ENCODE measurements at regions of chr6 and their contacts with region 1.

Region 1: GRCh38 chr6:105136431-105137350 is 43.1 kb downstream of the POPDC3 start:
- DNase-seq: peak; percentile 88
- H3K4me3 ChIP-seq: peak overlapping the region; percentile 60 to 97 (median 76)
- H3K27ac ChIP-seq: peak overlapping the region; percentile 82 to 97 (median 88)
- H3K4me1 ChIP-seq: peaks cover 0 to 20% (median 10%) of the 10 kb centered on the region in 4 donors
- H3K27me3 ChIP-seq: no peaks in the 10 kb centered on the region
- CTCF ChIP-seq: peak in 3 of 4 experiments; percentile 17 to 41 (median 31)
- EP300 ChIP-seq: no peak
- POLR2A ChIP-seq: no peak

Region 2: DNA sequence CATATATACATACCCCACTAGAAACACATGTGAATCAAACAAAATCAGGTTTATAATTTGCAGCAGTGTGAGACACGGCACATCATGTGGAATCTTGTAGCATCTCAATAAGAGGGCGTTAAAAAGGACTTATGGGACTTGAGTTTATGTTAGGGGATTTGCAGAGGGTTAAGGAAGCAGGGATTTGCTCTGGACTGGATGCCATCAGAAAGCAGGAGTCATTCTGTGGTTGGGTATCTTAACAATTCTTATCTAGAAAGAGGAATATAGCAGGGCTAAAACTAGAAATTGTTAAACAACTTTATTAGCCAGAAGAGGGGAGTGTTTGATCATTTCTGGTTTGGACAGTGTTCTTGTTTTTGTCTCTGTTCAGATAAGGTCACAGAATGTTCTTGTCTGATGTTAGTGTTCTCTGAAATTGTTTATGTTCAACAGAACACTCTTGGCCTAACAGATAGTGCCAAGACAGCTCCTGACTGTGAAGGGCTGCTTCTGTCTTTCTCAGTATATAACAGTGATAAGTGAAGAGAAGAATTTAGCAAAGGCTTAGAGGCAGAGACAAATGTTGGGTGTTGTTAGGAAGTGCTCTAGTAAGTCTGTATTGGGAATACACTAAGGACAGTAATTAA is 140.6 kb before region 1 on chr6:
- intact Hi-C with region 1: loop called (anchors 2 kb)
- DNase-seq: peak; percentile 67
- H3K4me3 ChIP-seq: no peak overlapping the region
- H3K27ac ChIP-seq: peak overlapping the region; percentile 73 to 81 (median 75)
- H3K4me1 ChIP-seq: peaks cover 0 to 44% (median 9%) of the 10 kb centered on the region in 4 donors
- H3K27me3 ChIP-seq: no peaks in the 10 kb centered on the region
- CTCF ChIP-seq: peak; percentile 30 to 58 (median 40)
- EP300 ChIP-seq: peak in 2 of 4 donors; percentile 58 to 86
- POLR2A ChIP-seq: no peak

Region 3: GRCh38 chr6:105087571-105088211 is 49.0 kb before region 1 on chr6:
- intact Hi-C with region 1: loop called (anchors 5 kb)
- DNase-seq: no peak
- H3K4me3 ChIP-seq: no peak overlapping the region
- H3K27ac ChIP-seq: no peak overlapping the region
- H3K4me1 ChIP-seq: peaks cover 0 to 16% (median 9%) of the 10 kb centered on the region in 4 donors
- H3K27me3 ChIP-seq: no peaks in the 10 kb centered on the region
- CTCF ChIP-seq: peak; percentile 60 to 82 (median 78)
- EP300 ChIP-seq: no peak
- POLR2A ChIP-seq: no peak

Region 4: DNA sequence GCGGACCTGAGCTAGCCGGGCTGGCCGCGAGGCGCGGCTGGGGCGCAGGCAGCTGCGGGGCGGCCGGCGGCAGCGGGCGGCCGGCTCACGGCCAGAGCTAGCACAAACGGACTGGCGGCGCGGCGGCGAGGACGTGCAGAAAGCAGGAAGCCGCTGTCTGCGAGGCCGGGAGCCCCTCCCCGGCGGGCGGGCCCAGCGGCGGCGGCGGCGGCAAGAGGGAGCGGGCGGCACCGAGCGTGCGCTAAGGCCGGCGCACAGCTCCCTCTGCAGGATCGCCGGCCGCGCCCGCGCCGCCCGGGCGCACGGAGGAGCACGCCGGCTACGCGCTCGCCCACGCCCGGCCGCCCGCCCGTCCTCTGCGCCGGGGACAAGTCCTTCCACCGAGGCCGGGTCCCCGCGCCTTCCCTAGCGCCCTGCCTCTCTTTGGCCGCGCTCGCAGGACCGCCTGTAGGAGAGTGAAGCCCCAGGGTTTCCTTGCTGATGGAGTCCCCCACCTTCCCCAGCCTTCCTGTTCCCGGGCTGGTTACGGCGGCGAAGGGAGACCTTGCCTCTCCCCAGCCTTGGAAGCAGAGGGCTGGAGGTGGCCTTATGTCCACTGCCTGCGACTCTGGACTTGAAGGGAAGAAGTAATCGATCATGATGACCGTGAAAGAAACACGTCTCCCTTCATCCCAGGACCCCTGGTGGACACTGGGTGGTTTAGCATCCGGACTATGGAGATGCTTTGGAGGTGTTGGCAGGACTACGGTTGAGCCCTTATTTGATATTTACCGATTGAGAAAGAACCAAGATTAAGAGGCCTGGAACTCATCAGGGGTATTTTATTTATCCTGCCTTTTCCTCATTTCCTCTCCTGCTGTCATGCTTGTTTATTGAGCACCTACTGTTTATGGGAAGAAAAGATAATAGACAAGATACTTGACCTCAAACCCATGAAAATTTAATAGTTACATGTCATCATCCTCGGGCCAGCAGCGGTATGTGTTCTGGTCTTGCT is 266.5 kb after region 1 on chr6 and contains the start of gene PREP:
- intact Hi-C with region 1: loop called (anchors 5 kb)
- DNase-seq: peak; percentile 90
- H3K4me3 ChIP-seq: peak within 1 kb of the TSS; percentile 86 to 95 (median 90)
- H3K27ac ChIP-seq: peak within 1 kb of the TSS; percentile 78 to 89 (median 86)
- H3K4me1 ChIP-seq: peaks cover 0 to 30% (median 25%) of the 10 kb centered on the region in 4 donors
- H3K27me3 ChIP-seq: no peaks in the 10 kb centered on the region
- CTCF ChIP-seq: peak; percentile 76 to 94 (median 86)
- EP300 ChIP-seq: no peak
- POLR2A ChIP-seq: no peak
- total RNA-seq, gene PREP: 14.1 to 23.5 (median 21.1) TPM

Measured in sigmoid colon (tissue), 7 donors.